ENCODE measurements at regions of chr3 and their contacts with region 1.

Region 1: GRCh38 chr3:43503067-43503728 is 118.6 kb downstream of the ANO10 start:
- DNase-seq: no peak
- H3K4me3 ChIP-seq: no peak overlapping the region
- H3K27me3 ChIP-seq: no peaks in the 10 kb centered on the region
- CTCF ChIP-seq: peak; percentile 42

Region 2: GRCh38 chr3:43155464-43156121 is 347.6 kb before region 1 on chr3:
- CTCF ChIA-PET with region 1: interaction called, 26 read pairs
- POLR2A ChIA-PET with region 1: no interaction called
- DNase-seq: peak; percentile 28
- H3K4me3 ChIP-seq: no peak overlapping the region
- H3K27me3 ChIP-seq: peaks cover 5% of the 10 kb centered on the region
- CTCF ChIP-seq: peak; percentile 76

Region 3: DNA sequence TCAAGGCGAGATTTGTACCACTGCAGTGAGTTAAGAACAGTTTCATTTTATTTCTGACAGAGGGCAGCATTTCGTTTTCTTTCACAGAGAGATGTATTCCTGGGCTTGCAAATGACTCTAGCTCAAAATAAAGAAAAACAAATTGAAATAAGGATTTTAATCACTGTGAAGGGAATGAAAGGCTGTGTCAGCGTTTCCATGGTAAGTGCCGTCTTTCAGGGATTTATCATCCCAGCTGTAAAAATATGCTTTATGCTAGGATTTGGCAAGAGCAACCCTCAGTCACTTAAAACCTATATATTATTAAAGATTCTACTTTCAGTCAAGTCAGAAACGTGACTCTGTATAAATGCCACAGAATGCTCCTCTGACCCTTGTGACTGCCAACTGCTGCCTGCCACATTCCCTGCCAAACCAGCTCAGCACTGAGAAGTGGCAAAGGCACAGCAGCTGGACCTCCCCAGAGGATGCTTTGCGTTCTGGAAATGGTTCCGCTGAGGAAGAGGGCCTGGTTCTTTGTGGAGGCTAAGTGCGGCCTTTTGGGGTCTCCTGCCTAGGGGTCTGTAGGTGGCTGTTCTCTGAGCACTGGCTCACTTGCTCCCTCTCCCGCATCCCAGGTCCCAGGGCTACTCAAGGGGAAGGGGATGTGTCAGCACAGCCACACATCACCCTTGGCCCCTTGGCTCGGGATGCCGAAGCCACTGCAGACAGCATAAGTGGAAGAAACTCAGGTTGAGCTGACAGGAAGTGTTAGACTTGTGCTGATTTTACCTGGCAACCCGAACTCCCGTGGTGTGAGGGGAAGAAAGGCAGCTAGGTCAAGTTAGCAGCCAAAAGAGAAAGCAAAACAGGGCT is 340.7 kb before region 1 on chr3:
- CTCF ChIA-PET with region 1: interaction called, 26 read pairs
- POLR2A ChIA-PET with region 1: no interaction called
- DNase-seq: peak; percentile 23
- H3K4me3 ChIP-seq: no peak overlapping the region
- H3K27me3 ChIP-seq: peaks cover 3% of the 10 kb centered on the region; the same call in 1 of the 2 replicates
- CTCF ChIP-seq: peak; percentile 52

Region 4: DNA sequence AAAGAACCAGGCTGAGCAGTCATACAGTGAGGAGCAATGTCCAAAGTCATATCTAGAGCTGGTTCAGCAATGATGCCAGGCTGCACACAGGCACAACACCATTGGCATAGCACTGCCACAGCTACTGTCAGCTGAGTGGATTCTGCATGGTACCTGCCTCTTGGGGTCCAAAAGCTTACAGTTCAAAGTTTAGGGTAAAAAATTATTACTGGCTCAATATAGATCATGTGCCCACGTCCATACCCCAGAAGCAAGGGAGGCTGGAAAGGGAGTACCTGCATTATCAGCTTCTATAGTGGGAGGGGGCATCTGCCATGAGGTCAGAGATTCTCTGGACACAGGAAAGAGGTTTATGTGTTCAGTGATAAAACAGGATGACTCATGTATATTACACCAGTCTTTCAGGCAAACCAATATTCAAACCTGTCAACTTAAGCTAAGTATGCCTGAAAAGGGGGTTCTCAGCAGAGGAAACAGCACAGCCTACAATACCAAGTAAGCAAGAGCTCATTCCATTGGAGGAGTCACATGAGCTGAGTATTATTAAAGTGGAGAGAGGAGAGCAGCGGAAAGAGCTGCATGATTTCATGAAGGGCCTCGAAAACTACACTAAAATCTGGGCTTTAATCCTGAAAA is 19.6 kb after region 1 on chr3:
- CTCF ChIA-PET with region 1: interaction called, 13 read pairs
- POLR2A ChIA-PET with region 1: no interaction called
- DNase-seq: no peak
- H3K4me3 ChIP-seq: no peak overlapping the region
- H3K27me3 ChIP-seq: no peaks in the 10 kb centered on the region
- CTCF ChIP-seq: no peak

Region 5: DNA sequence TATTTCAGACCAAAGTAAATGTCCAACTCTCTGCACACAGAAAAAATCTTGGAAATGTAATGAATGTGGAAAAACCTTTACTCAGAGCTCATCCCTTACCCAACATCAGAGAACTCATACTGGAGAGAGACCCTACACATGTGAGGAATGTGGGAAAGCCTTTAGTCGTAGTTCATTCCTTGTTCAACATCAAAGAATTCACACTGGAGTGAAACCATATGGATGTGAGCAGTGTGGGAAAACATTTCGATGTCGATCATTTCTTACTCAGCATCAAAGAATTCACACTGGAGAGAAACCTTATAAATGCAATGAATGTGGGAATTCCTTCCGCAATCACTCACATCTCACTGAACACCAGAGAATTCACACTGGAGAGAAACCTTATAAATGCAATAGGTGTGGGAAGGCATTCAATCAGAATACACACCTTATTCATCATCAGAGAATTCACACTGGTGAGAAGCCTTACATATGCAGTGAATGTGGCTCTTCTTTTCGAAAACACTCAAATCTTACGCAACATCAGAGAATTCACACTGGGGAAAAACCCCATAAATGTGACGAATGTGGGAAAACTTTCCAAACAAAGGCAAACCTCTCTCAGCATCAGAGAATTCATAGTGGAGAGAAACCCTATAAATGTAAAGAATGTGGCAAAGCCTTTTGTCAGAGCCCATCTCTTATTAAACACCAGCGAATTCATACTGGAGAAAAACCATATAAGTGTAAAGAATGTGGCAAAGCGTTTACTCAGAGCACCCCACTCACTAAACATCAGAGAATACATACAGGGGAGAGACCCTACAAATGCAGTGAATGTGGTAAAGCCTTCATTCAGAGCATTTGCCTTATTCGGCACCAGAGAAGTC is 1218.3 kb after region 1 on chr3:
- CTCF ChIA-PET with region 1: no interaction called
- POLR2A ChIA-PET with region 1: no interaction called
- DNase-seq: no peak
- H3K4me3 ChIP-seq: no peak overlapping the region
- H3K27me3 ChIP-seq: no peaks in the 10 kb centered on the region
- CTCF ChIP-seq: no peak

Measured in BJ (cell line).